Dendritic cell treated with granulocyte-macrophage colony-stimulating factor and Interleukin-4, amounts not matched to agents 40 ng/mL and 50 ng/mL, for 4 days (primary cell): ENCODE measurements at regions of chr7 and their contacts with region 1.

Region 1: GRCh38 chr7:152707766-152708165 is 31.8 kb upstream of the XRCC2 start:
- H3K4me3 Mint-ChIP-seq: no peak overlapping the region
- H3K27ac Mint-ChIP-seq: no peak overlapping the region
- H3K4me1 Mint-ChIP-seq: peaks cover 9% of the 10 kb centered on the region
- H3K27me3 Mint-ChIP-seq: peaks cover 2% of the 10 kb centered on the region

Region 2: DNA sequence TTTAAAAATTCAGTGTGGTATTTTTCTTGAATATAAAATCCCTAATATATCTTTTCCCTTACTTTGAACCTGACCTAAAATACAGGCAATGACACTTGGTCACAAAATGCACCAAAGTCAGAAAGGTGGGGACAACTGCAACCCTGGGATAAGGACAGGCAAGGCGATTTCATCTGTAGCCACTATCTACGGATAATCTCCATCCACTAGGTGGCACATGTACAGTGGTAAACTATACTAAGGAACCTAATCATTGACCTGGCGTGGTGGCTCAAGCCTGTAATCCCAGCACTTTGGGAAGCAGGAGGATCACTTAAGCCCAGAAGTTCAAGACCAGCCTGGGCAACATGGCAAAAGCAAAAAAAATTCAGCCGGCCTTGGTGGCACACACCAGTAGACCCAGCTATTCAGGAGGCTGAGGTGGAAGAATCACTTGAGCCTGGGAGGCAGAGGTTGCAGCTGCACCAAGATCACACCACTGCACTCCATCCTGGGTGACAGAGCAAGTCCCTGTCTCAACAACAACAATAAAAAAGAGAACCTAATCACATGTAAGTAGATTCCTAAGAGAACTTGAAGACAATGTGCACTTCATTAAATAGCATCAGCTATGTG is 370.9 kb before region 1 on chr7:
- intact Hi-C with region 1: loop called (anchors 2 kb)
- H3K4me3 Mint-ChIP-seq: no peak overlapping the region
- H3K27ac Mint-ChIP-seq: no peak overlapping the region
- H3K4me1 Mint-ChIP-seq: peaks cover 56% of the 10 kb centered on the region
- H3K27me3 Mint-ChIP-seq: no peaks in the 10 kb centered on the region